Motor neuron (in vitro differentiated cells): ENCODE measurements at regions of chr2 and their contacts with region 1.

Region 1: GRCh38 chr2:138787053-138787666 is 7.0 kb upstream of the NXPH2 start:
- ATAC-seq: peak in 5 of 8 experiments; percentile 23 to 49 (median 33)
- H3K4me3 ChIP-seq: no peak overlapping the region
- H3K27ac ChIP-seq: no peak overlapping the region
- H3K4me1 ChIP-seq: peaks cover 0 to 3% of the 10 kb centered on the region in 2 donors

Region 2: GRCh38 chr2:137888845-137889244 is 898.3 kb before region 1 on chr2:
- in situ Hi-C with region 1: loop called in 2 of 9 experiments (anchors 25 kb)
- ATAC-seq: no peak
- H3K4me3 ChIP-seq: no peak overlapping the region
- H3K27ac ChIP-seq: no peak overlapping the region
- H3K4me1 ChIP-seq: peaks cover 9 to 14% of the 10 kb centered on the region in 2 donors

Region 3: GRCh38 chr2:137910641-137911040 is 876.5 kb before region 1 on chr2:
- in situ Hi-C with region 1: loop called in 5 of 9 experiments (anchors 25 kb)
- ATAC-seq: peak in 3 of 8 experiments; percentile 21 to 45 (median 32)
- H3K4me3 ChIP-seq: no peak overlapping the region
- H3K27ac ChIP-seq: no peak overlapping the region
- H3K4me1 ChIP-seq: peaks cover 0 to 3% of the 10 kb centered on the region in 2 donors

Region 4: DNA sequence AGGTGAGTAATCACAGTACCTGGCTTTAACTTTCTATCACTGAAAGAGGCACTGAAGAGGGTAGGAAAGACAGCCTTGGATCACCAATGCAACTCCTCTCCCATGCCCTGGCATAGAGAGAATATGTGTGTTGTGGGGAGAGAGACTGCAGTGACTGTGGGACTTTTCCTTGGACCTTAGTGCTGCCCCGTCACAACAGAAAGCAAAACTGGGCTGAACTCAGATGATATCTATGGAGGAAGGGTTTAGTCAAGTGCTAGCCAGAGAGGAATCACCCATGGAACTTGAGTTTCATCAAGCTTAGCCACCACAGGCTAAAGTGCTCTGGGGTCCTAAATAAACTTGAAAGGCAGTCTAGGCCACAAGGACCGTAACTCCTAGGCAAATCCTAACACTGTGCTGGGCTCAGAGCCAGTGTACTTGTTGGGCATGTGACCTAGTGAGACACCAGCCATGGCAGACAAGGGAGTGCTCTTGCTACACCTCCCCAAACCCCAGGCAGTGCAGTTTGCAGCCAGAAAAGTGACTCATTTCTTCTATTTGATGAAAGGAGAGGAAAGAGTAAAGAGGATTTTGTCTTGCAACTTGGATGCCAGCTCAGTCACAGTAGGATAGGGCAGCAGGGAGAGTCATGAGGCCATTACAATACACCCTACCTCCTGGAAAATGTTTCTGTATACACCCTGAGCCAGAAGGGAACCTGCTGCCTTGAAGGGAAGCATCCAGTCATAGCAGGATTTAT is 391.4 kb before region 1 on chr2:
- in situ Hi-C with region 1: loop called in 2 of 9 experiments (anchors 25 kb)
- ATAC-seq: peak in 4 of 8 experiments; percentile 7 to 97 (median 56)
- H3K4me3 ChIP-seq: no peak overlapping the region
- H3K27ac ChIP-seq: no peak overlapping the region
- H3K4me1 ChIP-seq: no peaks in the 10 kb centered on the region

Region 5: DNA sequence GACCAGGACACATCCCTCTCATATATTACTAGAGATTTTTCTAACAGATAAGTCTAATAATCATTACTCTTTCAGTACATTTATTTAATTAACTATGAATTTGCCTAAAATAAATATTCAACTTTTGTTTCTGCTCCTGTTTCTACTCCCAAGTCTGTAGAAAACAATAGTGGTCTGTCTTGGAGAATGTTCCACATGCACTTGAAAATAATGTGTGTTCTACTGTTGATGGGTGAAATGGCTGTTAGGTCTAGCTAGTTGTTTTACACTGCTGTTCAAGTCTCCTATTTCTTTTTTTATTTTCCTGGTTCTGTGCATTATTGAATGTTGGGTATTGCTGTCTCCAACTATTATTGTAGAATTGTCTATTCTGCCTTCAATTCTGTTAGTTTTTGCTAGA is 238.4 kb before region 1 on chr2:
- in situ Hi-C with region 1: no loop called
- ATAC-seq: no peak
- H3K4me3 ChIP-seq: no peak overlapping the region
- H3K27ac ChIP-seq: no peak overlapping the region
- H3K4me1 ChIP-seq: no peaks in the 10 kb centered on the region

Region 6: GRCh38 chr2:138689705-138690104 is 97.5 kb before region 1 on chr2:
- in situ Hi-C with region 1: no loop called
- ATAC-seq: no peak
- H3K4me3 ChIP-seq: no peak overlapping the region
- H3K27ac ChIP-seq: no peak overlapping the region
- H3K4me1 ChIP-seq: no peaks in the 10 kb centered on the region